ENCODE measurements at regions of chr4 and their contacts with region 1.

Region 1: DNA sequence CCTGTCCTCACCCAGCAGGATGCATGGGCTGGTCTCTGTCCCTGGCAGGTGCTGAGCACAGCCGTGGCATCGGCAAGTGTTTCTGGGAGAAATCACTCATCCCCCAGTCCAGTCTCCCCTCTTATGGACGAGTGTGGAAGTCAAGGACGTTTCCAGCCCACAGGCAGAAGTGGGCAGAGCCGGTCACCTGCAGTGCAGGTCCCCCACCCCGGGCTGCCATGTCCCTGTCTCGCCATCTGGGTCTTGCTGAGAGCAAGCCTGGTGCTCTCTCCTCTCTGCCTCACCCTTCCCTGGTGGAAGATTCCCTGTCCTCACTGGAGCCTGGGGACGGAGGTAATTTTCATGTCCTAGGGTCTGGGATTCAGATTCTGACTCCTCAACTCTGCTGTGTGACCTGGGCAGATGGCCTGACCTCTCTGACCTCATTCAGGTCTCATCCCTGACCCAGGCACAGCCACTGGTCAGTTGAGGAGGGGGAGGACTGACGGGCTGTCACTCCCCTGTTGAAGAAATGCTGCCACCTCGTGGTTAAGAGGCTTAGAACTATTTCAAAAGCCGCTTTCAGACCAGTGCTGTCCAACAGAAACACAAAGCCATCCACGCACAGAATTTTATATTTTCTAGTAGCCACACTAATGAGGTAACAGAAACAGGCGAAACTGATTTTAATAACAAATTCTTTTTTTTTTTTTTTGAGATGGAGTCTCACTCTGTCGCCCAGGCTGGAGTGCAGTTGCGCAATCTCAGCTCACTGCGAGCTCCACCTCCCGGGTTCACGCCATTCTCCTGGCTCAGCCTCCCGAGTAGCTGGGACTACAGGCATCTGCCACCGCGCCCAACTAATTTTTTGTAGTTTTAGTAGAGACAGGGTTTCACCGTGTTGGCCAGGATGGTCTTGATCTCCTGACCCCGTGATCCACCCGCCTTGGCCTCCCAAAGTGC is 1.8 kb downstream of the CPZ start:
- DNase-seq: no peak

Region 2: GRCh38 chr4:8471206-8471877 is 123.0 kb before region 1 on chr4:
- intact Hi-C with region 1: loop called in 1 of 2 experiments (anchors 2 kb)
- DNase-seq: no peak

Region 3: DNA sequence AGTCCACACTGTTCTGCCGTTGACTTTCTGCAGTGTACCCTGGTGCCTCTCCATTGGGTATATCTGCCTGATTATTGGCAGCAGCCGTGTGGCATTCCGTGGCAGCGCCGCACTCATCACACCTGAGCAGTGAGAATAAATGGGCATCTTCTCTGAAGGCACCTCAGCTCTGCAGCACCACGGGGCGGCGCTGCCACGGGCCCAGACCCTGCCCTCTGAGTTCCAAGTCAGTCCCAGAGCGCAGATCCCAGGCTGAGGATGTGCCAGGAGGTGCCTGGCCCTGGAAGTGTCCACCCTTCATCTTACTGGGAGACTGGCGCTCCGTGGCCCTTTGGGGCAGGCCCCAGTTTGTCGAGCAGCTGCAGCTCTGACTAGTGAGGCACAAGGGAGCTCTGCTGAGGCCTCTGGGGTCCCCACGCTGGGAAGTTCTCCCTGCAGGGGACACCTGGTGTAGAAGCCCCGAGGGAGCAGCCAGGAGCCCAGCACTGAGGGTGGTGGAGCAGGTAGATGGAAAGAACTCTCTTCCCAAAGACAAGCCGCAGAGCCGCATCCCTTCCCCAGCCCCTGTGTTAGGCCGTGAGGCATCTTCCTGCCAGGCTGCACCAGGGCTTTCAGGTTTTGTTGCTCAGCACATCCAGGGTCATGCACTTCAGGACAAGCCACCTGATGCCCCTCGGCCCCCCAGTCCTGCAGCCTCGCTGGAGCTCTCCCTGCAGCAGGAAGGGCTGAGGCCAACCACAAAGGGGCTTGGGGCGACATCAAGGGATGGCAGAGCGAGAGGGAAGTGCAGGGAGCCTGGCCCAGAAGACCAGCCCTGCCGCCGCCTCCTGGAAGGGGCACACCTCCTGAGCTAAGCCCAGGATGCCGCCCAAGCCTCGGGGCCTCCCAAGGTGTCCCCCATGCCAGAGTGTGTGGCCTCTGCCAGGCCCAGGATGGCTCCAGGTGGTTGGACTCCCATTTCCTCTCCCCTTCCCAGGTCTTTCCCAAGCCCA is 117.0 kb before region 1 on chr4:
- intact Hi-C with region 1: loop called in 1 of 2 experiments (anchors 1 kb)
- DNase-seq: no peak

Region 4: DNA sequence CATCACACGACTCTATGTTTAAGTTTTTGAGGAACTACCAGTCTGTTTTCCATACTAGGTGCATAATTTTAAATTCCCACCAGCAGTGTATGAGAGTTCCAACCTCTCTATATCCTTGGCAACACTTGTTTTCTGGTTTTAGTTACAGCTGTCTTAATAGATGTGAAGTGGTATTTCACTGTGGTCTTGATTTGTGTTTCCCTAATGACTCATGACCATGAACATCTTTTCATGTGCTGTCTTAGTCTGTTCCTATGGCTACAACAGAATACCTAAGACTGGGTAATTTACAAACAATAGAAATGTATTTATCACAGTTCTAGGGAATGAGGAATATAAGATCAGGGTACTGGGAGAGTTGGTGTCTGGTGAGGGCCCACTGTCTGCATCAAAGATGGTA is 65.7 kb before region 1 on chr4:
- intact Hi-C with region 1: loop called in 1 of 2 experiments (anchors 5 kb)
- DNase-seq: no peak

Region 5: DNA sequence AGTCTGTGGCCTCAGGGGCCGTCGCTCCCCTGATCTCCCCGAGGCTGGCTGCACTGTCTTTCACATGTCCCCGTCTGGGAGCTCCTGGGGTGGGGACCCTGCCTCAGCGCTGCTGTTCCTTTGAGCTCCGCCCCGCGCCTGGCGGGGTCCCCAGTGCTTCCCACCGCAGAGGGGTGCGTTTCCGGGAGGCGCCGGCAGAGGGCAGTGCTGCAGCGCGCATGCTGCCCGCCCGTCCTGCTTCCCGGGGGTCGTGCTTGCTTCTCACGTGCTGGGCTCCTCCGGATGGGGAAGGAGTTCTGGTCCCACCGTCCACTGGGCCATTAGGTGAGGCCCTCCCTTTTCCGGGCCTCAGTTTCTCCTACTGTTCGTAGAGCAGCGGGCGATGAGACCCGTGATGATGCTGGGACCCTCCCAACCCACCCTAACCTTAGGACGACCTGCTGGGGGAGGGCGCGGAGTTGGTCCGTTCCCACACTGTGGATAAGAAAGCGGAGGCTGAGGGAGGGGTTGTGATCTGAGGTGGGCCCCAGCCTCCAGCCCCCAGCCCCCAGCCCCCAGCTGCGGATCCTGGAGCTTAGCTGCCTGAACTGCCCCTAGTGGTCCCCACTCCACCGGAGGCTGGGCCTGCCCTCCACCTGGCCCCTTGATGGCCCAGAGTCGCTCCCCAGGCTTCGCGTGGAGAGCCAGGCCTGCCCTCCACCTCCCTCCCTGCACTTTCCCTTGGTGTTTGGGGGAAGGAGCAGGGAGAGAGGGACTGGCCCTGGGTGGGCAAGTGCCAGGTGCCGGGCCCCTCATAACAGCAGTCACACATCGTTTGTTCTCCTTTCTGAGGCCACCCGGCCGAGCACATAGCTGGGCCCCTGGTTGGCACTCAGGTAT is 13.5 kb after region 1 on chr4:
- intact Hi-C with region 1: no loop called
- DNase-seq: no peak

Region 6: DNA sequence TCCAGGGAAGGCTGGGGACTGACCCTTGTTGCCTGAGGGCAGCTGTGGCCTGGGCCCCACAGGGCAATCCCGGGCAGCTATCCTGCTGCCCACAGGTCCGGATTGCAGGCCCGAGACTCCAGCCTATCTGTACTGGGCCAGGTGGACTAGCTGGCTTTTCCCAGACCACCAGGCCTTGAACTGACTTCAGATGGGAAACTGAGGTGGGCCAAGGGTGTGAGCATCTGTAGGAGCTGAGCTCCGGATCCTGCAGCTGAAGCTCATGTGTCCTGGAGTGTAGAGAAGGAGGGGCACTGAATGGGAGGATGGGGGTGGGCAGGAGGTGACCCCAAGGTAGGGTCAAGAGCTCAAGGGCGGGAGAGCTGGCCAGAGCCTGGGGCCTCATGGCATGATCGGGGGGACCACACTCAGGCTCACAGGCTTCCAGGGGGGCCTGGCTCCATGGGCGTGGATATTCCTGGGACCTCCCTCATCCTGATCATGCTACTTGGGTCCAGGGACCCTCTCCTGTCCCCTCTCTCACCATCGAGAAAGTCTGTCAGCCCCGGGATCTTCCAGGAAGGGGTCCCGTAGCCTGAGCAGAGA is 25.5 kb after region 1 on chr4:
- intact Hi-C with region 1: no loop called
- DNase-seq: peak; percentile 48

Region 7: DNA sequence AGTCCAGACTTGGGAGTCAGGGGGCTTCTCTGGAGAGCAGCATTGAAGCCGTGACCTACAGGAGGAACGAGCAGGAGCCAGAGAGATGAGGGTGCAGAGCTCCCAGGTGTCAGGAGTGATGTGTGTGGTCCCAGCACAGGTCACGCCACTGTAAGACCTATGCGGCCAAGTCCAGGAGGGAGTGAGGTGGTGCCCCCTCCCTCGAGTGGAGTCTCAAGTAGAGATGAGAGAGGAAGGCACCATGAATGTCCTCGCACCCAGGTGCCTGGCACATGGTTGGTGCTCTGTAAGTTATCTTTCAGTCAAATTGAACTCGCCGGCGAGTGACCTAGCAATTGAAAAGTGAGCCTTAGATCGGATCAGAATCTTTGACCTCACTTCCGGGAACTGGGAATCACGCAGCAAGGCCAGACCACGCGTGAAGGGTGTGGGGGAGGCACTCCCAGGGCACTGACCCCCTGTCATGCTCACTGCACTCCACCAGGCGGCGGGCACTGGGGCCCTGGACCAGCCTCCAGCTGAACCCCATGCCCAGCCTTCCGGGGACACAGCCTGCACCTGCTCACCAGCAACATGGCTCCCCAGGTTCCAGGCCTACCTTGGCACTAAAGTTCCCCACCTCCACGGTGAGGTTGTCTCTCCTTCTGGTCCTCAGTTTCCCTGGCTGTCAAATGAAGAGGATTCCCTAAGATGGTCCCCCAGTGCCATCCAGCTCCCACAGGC is 149.9 kb after region 1 on chr4:
- intact Hi-C with region 1: no loop called
- DNase-seq: peak; percentile 68

Region 8: DNA sequence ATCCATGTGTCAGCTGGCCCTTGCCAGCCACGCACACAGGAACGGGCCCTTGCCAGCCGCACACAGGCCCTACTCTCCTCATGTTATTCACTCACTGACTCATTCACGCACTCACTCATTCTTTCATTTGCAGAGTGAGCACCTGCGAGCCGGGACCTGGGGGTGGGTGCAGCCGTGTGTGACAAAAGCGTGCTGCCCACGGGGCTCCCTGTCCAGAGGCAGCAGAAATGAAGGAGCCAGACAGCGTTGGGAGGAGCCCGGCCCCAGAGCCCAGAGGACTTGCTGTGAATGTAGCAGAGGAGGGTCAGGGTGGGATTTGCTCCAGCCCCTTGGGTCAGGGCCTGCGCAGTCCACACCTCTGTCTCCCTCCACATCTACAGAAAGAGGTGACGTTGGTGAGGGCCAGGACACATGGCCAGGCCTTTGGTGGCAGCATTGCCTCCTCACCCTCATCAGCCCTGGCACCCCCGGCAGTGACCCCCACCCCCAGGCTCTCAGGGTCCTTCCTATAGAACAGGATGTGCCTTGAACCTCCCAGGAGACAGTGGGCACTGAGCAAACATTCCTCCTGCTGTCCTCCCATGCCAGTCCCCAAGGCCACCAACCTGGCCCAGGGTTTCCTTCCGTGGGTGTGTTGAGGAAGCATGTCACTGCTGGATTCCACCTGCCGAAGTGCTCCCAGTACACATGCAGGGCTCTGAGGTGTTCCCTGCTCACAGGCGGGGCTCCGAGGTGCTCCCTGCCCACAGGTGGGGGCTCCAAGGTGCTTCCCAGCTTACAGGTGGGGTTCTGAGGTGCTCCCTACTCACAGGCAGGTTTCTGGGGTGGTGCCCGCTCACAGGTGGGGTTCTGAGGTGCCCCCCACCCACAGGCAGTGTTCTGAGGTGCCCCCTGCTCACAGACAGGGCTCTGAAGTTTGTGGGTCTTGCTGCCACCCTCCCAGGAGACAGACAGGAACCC is 171.5 kb after region 1 on chr4:
- intact Hi-C with region 1: no loop called
- DNase-seq: peak; percentile 73